Naive thymus-derived CD4-positive, alpha-beta T cell (primary cell): ENCODE measurements at regions of chr17 and their contacts with region 1.

Region 1: GRCh38 chr17:48543107-48543853 is 1.6 kb downstream of the HOXB2 start:
- DNase-seq: peak in 8 of 9 donors; percentile 51 to 71 (median 60)
- ATAC-seq: peak; percentile 67
- H3K4me3 ChIP-seq: peak overlapping the region; percentile 80
- H3K4me3 Mint-ChIP-seq: peak overlapping the region; percentile 94 to 100 (median 98)
- H3K27ac ChIP-seq: peak overlapping the region; percentile 90
- H3K27ac Mint-ChIP-seq: peak overlapping the region; percentile 95 to 100 (median 99)
- H3K4me1 ChIP-seq: peaks cover 0 to 31% of the 10 kb centered on the region in 2 donors
- H3K4me1 Mint-ChIP-seq: peaks cover 20 to 72% (median 56%) of the 10 kb centered on the region in 7 donors
- H3K27me3 ChIP-seq: no peaks in the 10 kb centered on the region
- H3K27me3 Mint-ChIP-seq: peaks cover 0 to 23% (median 10%) of the 10 kb centered on the region in 5 donors

Region 2: DNA sequence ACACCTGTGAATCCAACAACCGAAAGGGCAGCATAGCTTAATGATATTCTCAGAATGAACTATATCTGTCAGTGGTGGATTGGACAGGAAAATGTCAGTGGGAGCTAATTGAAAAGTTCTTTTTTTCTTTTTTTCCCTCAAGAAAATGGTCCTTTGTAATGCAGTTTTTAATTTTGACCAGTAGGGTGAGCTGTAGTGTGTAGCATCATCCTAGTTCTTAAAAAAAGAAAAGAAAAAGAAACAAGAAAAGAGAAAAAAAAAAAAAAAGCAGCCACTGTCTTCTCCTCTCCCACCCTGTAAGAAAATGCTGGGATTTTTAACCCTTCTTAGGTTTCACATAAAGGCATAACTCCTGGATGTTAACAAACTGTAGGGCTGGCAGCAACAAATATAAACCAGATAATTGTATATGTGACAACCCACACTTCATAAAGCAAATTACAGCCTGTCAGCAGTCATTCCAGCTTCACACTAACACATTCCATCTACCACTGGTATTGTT is 191.4 kb before region 1 on chr17:
- CTCF ChIA-PET with region 1: interaction called, 3 read pairs
- POLR2A ChIA-PET with region 1: interaction called, 3 read pairs
- intact Hi-C with region 1: loop called in 1 of 2 experiments (anchors 5 kb)
- DNase-seq: peak in 7 of 9 donors; percentile 17 to 58 (median 41)
- ATAC-seq: peak; percentile 72
- H3K4me3 ChIP-seq: no peak overlapping the region
- H3K4me3 Mint-ChIP-seq: no peak overlapping the region
- H3K27ac ChIP-seq: no peak overlapping the region
- H3K27ac Mint-ChIP-seq: no peak overlapping the region
- H3K4me1 ChIP-seq: peaks cover 0 to 4% of the 10 kb centered on the region in 2 donors
- H3K4me1 Mint-ChIP-seq: peaks cover 0 to 20% (median 13%) of the 10 kb centered on the region in 7 donors
- H3K27me3 ChIP-seq: no peaks in the 10 kb centered on the region
- H3K27me3 Mint-ChIP-seq: no peaks in the 10 kb centered on the region

Region 3: GRCh38 chr17:48441231-48441711 is 102.0 kb before region 1 on chr17:
- CTCF ChIA-PET with region 1: no interaction called
- POLR2A ChIA-PET with region 1: interaction called, 3 read pairs
- intact Hi-C with region 1: loop called (anchors 5 kb)
- DNase-seq: peak in 7 of 9 donors; percentile 74 to 88 (median 86)
- ATAC-seq: peak; percentile 80
- H3K4me3 ChIP-seq: peak overlapping the region; percentile 28
- H3K4me3 Mint-ChIP-seq: peak overlapping the region; percentile 61 to 86 (median 76)
- H3K27ac ChIP-seq: peak overlapping the region; percentile 63
- H3K27ac Mint-ChIP-seq: peak overlapping the region; percentile 69 to 96 (median 95)
- H3K4me1 ChIP-seq: peaks cover 93 to 95% of the 10 kb centered on the region in 2 donors
- H3K4me1 Mint-ChIP-seq: peaks cover 80 to 97% (median 94%) of the 10 kb centered on the region in 7 donors
- H3K27me3 ChIP-seq: no peaks in the 10 kb centered on the region
- H3K27me3 Mint-ChIP-seq: no peaks in the 10 kb centered on the region

Region 4: DNA sequence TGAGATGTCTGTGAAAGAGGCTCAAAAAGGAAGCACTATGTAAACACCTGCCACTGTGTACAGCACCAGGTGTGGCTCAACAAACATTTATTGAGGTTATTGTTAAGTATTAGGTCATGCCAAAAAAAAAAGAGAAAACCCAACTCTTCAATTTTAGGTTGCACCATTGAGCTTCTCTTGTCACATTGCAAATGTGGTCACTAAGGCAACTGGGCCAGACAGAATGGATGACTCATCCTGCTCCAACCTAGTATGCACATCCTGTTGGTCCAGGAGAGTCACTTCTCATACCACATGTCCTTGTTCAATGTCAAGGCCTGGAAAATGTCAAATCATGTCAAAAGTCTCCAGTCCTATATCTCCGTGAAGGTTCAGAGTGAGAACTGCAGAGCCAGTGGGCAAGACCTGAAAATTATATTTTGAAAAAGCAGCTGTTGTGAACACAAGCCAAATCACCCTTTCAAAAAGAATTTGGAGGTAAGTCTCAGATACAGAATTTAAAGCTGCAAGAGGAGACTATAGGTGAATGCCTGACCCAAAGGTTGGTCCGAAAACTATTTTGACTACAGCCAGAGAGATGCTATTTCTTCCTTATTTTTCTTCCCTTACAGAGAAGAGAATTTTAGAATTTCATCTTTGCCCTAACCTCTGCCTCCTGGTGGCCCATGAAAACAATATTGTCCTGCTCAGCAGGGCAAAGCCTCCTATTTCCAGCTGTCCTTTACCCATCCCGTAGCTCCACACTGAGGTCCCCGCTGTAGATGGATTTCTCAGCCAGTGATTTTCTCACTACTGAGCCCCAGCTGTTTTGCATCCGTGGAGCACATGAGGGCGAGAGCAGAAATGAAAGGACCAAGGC is 37.3 kb before region 1 on chr17:
- CTCF ChIA-PET with region 1: interaction called, 3 read pairs
- POLR2A ChIA-PET with region 1: interaction called, 7 read pairs
- intact Hi-C with region 1: loop called in 1 of 2 experiments (anchors 1 kb)
- DNase-seq: peak in 2 of 9 donors; percentile 30 to 33
- ATAC-seq: peak; percentile 89
- H3K4me3 ChIP-seq: no peak overlapping the region
- H3K4me3 Mint-ChIP-seq: peak overlapping the region in 1 of 10 donors; percentile 46
- H3K27ac ChIP-seq: no peak overlapping the region
- H3K27ac Mint-ChIP-seq: peak overlapping the region in 3 of 9 donors; percentile 18 to 91 (median 20)
- H3K4me1 ChIP-seq: peaks cover 0 to 5% of the 10 kb centered on the region in 2 donors
- H3K4me1 Mint-ChIP-seq: peaks cover 0 to 62% (median 6%) of the 10 kb centered on the region in 7 donors
- H3K27me3 ChIP-seq: no peaks in the 10 kb centered on the region
- H3K27me3 Mint-ChIP-seq: peaks cover 6 to 29% (median 24%) of the 10 kb centered on the region in 5 donors

Region 5: GRCh38 chr17:48555258-48556228 is 12.3 kb after region 1 on chr17:
- CTCF ChIA-PET with region 1: interaction called, 4 read pairs
- POLR2A ChIA-PET with region 1: interaction called, 24 read pairs
- intact Hi-C with region 1: no loop called
- DNase-seq: peak in 3 of 9 donors; percentile 15 to 20 (median 19)
- ATAC-seq: peak; percentile 56
- H3K4me3 ChIP-seq: peak overlapping the region; percentile 41
- H3K4me3 Mint-ChIP-seq: peak overlapping the region; percentile 81 to 96 (median 92)
- H3K27ac ChIP-seq: no peak overlapping the region
- H3K27ac Mint-ChIP-seq: peak overlapping the region; percentile 7 to 97 (median 84)
- H3K4me1 ChIP-seq: no peaks in the 10 kb centered on the region
- H3K4me1 Mint-ChIP-seq: peaks cover 4 to 19% (median 12%) of the 10 kb centered on the region in 7 donors
- H3K27me3 ChIP-seq: no peaks in the 10 kb centered on the region
- H3K27me3 Mint-ChIP-seq: peaks cover 7 to 71% (median 22%) of the 10 kb centered on the region in 5 donors

Region 6: DNA sequence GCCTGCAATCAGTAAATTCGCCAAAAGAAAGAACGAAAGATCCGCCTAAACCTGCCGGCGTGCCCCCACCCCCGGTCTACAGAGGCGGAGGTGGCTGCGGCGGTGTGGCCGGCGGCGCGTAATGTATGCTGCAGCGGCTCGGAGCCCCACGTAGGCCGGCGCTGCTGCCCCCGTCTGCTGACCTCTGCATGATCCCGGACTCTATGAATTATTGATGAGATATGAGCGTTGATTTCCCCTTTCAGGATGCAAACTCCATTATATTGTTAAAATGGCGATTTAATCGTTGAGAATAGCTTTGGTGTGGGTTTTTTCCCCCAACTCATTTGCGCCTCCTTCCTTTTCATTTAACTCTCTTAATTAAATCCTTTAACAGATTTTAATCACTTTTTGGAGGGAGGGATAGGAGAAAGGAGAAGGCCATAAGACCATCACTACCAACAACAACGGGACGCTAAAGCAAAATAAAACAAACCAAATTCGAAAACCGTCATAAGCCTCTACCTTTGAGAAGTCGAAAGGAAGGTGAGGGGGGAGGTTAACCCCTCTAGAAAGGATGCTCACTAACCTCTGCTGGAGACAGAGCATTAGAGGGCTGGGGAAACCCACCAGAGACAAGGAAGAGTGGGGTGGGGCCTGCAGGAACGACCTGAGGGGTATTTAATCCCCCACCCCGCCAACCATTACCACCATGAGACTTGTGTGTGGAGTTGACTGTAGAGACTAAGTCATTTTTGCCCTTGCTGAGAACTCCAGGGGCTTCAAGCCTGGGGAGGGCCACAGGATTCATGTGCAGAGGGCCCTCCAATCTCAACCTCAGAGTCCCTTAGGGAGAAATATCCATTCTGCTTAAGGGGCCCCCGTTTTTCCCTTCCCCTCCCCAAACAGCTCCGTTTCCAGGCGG is 43.3 kb after region 1 on chr17:
- CTCF ChIA-PET with region 1: interaction called, 3 read pairs
- POLR2A ChIA-PET with region 1: interaction called, 20 read pairs
- intact Hi-C with region 1: no loop called
- DNase-seq: no peak
- ATAC-seq: no peak
- H3K4me3 ChIP-seq: peak overlapping the region; percentile 60
- H3K4me3 Mint-ChIP-seq: peak overlapping the region; percentile 81 to 97 (median 91)
- H3K27ac ChIP-seq: no peak overlapping the region
- H3K27ac Mint-ChIP-seq: peak overlapping the region in 1 of 9 donors; percentile 52
- H3K4me1 ChIP-seq: peaks cover 9 to 25% of the 10 kb centered on the region in 2 donors
- H3K4me1 Mint-ChIP-seq: peaks cover 17 to 70% (median 31%) of the 10 kb centered on the region in 7 donors
- H3K27me3 ChIP-seq: peaks cover 8 to 37% of the 10 kb centered on the region in 2 donors
- H3K27me3 Mint-ChIP-seq: peaks cover 88 to 97% (median 95%) of the 10 kb centered on the region in 5 donors

Region 7: DNA sequence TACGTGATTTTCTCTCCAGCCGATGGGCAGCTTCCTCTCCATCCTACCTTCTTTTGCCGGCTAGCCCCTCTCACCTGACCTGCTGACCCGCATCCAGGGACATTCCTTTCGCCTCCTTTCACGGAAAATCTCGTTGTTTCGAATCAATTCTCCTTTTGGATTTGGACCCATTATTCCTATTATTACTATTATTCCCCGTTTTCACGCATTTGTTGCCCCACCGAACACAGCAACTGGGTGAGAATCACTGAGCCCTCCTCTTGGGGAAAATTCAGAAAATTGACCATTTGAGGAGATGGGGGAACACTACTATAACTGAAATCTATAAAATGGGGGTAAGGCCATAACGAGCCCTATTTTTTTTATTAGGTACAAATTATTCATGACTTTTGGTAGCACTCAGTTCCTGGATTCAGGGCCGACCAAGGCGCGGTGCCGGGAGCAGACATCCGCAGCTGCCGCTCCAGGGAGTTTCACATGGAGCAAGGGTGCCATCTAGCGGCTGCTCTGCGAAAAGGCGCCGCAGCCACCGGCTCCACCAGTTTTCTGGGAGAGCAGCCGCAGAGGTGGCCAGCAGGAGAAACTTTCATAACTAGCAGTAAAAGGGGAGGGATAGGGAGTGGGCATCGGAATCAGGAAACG is 75.1 kb after region 1 on chr17:
- CTCF ChIA-PET with region 1: no interaction called
- POLR2A ChIA-PET with region 1: no interaction called
- intact Hi-C with region 1: no loop called
- DNase-seq: peak; percentile 62 to 86 (median 74)
- ATAC-seq: peak; percentile 90
- H3K4me3 ChIP-seq: no peak overlapping the region
- H3K4me3 Mint-ChIP-seq: peak overlapping the region in 9 of 10 donors; percentile 12 to 53 (median 40)
- H3K27ac ChIP-seq: no peak overlapping the region
- H3K27ac Mint-ChIP-seq: peak overlapping the region in 3 of 9 donors; percentile 74 to 83 (median 81)
- H3K4me1 ChIP-seq: peaks cover 19 to 23% of the 10 kb centered on the region in 2 donors
- H3K4me1 Mint-ChIP-seq: peaks cover 26 to 49% (median 36%) of the 10 kb centered on the region in 7 donors
- H3K27me3 ChIP-seq: peaks cover 35 to 59% of the 10 kb centered on the region in 2 donors
- H3K27me3 Mint-ChIP-seq: peaks cover 90 to 97% (median 92%) of the 10 kb centered on the region in 5 donors